Psoas muscle (tissue), 8 donors: ENCODE measurements at regions of chr6 and their contacts with region 1.

Region 1: GRCh38 chr6:99425647-99426453 is 742 bp upstream of the PNISR start:
- DNase-seq: peak; percentile 87 to 92
- ATAC-seq: peak; percentile 86
- H3K4me3 ChIP-seq: peak overlapping the region; percentile 96
- H3K27ac ChIP-seq: peak overlapping the region; percentile 99
- H3K4me1 ChIP-seq: peaks cover 49% of the 10 kb centered on the region
- H3K27me3 ChIP-seq: no peaks in the 10 kb centered on the region
- CTCF ChIP-seq: peak; percentile 46

Region 2: GRCh38 chr6:99393698-99394531 is 31.9 kb before region 1 on chr6 and contains the start of gene COQ3:
- intact Hi-C with region 1: loop called in 1 of 2 experiments (anchors 5 kb)
- DNase-seq: peak; percentile 78 to 87
- ATAC-seq: peak; percentile 78 to 91 (median 86)
- H3K4me3 ChIP-seq: peak within 1 kb of the TSS; percentile 89
- H3K27ac ChIP-seq: peak within 1 kb of the TSS; percentile 85
- H3K4me1 ChIP-seq: no peaks in the 10 kb centered on the region
- H3K27me3 ChIP-seq: no peaks in the 10 kb centered on the region
- CTCF ChIP-seq: no peak
- total RNA-seq, gene COQ3: 13.5 to 19.0 (median 14.9) TPM

Region 3: DNA sequence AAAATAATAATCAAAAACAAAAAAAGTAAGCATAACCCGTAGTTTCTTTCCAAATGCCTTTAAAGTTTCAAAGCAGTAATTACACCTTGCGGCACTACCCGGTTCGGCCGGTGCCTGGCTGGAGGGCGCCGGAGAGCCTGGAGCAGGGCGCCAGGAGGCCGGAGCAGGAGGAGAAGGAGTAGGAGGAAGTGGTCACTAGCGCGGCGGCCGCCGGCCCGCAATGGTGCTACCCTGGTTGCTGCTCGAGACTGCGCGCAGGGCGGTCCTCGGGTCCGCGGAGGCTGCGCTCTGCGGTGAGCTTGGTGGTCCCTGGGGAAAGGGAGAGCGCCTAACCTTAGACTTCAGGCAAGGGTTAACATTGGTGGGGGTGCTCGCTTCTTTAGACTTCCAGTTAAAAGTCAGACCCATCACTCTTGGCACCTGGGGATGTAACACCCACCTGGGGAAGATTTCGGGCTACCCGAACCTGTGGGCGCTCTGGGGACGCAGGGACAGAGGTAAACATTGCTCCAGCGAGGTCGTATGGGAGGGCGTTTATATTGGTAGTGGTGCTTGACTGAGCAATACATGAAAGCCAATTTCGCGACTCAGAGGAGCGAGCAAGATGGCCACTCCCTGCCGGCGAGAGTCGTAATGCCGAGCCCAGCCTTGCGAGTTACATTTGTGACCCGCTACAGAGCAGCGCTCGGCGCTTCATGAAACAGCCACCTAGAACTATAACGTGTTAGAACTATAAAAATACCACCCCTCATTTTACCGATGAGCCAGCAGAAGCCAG is 95.2 kb after region 1 on chr6:
- intact Hi-C with region 1: loop called in 1 of 2 experiments (anchors 5 kb)
- DNase-seq: peak; percentile 80 to 91
- ATAC-seq: peak; percentile 93 to 96 (median 94)
- H3K4me3 ChIP-seq: peak overlapping the region; percentile 84
- H3K27ac ChIP-seq: peak overlapping the region; percentile 90
- H3K4me1 ChIP-seq: peaks cover 9% of the 10 kb centered on the region
- H3K27me3 ChIP-seq: no peaks in the 10 kb centered on the region
- CTCF ChIP-seq: peak; percentile 87

Region 4: DNA sequence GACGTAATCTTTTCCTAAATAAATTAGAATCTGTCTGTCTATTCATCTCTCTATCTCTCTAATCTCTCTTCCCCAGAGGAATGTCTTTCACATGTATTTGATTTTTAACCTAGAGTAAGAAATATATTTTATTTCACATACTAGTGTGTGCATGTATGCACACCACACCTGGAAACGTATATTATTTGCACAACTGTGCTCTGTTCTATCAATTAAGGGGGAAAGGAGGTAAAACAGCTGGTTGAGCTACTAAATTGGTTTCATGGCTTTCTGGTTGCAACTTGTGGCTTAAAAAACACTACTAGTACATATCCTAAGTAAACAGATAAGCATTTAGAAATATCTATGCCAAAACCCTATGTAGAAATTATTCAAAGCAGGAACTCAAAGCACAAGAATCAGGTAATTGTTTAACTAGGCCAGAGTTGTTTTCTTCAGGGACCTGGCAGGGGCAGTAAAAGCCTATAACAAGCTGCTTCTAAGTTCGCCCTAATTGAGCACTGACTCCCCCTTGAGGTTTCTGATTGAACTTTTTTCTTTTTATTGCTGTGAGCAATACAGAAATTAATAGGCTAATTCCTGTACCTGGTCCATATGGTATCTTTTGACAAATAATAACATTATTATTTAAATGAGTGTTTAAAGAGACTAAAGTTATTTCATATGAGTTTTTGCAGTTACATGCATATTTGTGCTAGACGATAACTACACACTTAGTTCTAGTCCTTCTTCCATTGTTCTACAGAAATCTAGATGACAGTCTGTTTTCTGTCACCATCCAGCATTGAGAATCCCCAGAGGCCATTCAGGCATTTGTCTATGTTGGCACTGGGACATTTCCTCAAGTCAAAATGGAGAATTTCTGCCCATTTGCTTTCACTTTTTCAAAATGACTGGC is 479.6 kb after region 1 on chr6:
- intact Hi-C with region 1: no loop called
- DNase-seq: no peak
- ATAC-seq: peak in 2 of 4 donors; percentile 52 to 60
- H3K4me3 ChIP-seq: no peak overlapping the region
- H3K27ac ChIP-seq: no peak overlapping the region
- H3K4me1 ChIP-seq: no peaks in the 10 kb centered on the region
- H3K27me3 ChIP-seq: no peaks in the 10 kb centered on the region
- CTCF ChIP-seq: peak; percentile 49

Region 5: DNA sequence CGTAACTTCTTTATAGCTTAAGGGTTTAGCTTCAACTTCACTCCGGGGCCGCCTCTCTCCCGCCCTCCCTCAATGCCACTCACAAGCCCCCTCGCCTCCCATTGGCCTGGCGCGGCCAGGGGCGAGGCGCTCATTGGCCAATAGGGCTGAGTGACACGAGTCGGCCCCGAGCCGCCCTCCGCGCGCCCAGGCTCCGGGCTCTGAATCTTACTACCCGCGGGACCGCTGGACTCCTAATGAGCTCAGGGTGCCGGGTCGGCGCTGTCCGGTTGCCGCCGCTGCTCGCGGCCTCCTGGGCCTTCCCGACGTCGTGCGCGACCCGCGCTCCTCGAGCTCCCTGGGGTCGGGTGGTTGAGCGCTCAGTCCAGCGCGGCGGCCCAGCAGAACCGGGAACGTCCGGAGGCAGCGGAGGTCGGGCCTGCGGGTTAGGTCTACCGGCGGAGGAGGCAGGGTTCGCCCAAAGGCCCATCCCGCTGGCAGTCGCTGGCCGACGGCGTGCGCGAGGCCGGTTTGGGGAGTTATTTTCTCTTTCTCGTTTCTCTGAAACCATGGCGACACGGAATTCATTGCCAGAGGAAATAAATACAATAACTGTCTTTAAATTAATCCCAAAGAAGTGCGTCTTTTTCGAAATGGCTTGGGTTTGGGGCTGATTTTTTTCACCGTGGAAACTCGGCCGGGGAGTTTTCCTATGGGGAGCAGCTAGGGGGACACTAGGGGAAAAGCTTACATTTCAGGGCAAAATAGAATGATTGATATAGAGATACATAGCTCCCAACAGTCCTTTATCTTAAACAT is 1039.3 kb after region 1 on chr6 and contains the start of gene SIM1:
- intact Hi-C with region 1: loop called in 1 of 2 experiments (anchors 10 kb)
- DNase-seq: peak; percentile 62 to 95
- ATAC-seq: peak; percentile 90 to 98 (median 96)
- H3K4me3 ChIP-seq: peak within 1 kb of the TSS; percentile 84
- H3K27ac ChIP-seq: peak within 1 kb of the TSS; percentile 96
- H3K4me1 ChIP-seq: peaks cover 10% of the 10 kb centered on the region
- H3K27me3 ChIP-seq: peaks cover 0 to 44% (median 4%) of the 10 kb centered on the region in 3 donors
- CTCF ChIP-seq: no peak
- total RNA-seq, gene SIM1: 0.60 to 14.4 (median 5.4) TPM